ENCODE measurements at regions of chr2 and their contacts with region 1.

Region 1: DNA sequence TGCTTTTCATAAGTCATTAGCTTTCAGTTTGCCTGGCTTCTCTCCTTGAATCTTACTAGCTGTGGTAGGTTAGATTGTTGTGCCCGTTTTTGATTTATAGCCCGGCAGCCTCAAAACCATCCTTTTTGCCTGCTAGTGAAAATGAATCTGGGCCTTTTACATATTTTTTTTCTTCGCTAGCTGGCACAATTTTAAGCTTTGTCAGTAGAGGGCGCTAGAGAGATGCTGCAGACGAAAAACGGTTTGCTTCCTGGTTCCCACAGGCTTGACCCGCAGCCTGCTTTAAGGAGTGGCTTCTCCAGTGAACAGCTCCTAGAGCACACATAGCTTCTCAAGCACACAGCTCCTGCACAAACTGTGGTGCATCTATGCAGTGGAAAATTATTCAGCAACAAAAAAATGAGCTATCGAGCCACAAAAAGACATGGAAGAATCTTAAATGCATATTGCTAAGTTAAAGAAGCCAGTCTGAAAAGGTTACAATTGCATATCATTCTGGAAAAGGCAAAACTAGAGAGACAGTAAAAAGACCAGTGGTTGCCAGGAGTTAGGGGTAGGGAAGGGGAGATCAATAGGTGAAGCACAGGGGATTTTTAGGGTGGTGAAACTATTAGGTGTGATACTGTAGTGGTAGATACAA is 47.9 kb downstream of the E2F6 start:
- DNase-seq: peak; percentile 63 to 77
- H3K4me3 ChIP-seq: no peak overlapping the region
- H3K4me3 Mint-ChIP-seq: no peak overlapping the region
- H3K27ac Mint-ChIP-seq: no peak overlapping the region
- H3K4me1 ChIP-seq: no peaks in the 10 kb centered on the region
- H3K4me1 Mint-ChIP-seq: no peaks in the 10 kb centered on the region
- H3K27me3 ChIP-seq: no peaks in the 10 kb centered on the region
- H3K27me3 Mint-ChIP-seq: no peaks in the 10 kb centered on the region
- CTCF ChIP-seq: peak; percentile 84 to 85

Region 2: DNA sequence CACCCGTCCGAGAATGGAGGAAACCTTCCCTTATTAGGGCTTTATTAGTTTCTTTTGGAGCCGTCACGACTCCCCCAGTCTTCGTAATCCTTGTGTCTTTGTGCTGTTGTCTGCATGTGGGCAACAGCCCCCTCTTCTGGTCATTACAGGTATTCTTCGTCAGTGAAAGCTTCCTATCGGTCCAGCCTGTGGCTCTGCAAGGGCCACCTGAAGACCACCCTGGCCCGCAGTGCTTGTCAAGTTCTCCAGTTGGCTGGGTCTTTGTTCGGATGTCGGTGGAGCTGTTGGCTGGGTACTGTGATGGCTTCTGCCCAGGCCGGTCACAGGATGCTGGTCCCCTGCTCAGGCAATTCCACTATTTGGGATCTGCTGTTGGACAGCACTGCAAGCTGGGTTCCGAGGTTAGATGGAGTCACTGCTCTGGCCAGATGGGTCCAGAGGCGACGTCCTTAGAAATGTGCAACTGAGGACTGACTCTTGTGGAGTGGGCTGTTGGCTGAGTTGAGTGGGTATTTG is 28.7 kb after region 1 on chr2:
- CTCF ChIA-PET with region 1: interaction called, 10 read pairs
- POLR2A ChIA-PET with region 1: no interaction called
- intact Hi-C with region 1: loop called (anchors 2 kb)
- DNase-seq: peak; percentile 47 to 64
- H3K4me3 ChIP-seq: no peak overlapping the region
- H3K4me3 Mint-ChIP-seq: no peak overlapping the region
- H3K27ac Mint-ChIP-seq: no peak overlapping the region
- H3K4me1 ChIP-seq: no peaks in the 10 kb centered on the region
- H3K4me1 Mint-ChIP-seq: no peaks in the 10 kb centered on the region
- H3K27me3 ChIP-seq: no peaks in the 10 kb centered on the region
- H3K27me3 Mint-ChIP-seq: no peaks in the 10 kb centered on the region
- CTCF ChIP-seq: peak; percentile 72

Measured in Caco-2 (cell line).